Ascending aorta (tissue), 2 donors: ENCODE measurements at regions of chr17 and their contacts with region 1.

Region 1: GRCh38 chr17:60102632-60103096 is 23.9 kb upstream of the HEATR6 start:
- DNase-seq: no peak
- H3K4me3 ChIP-seq: peak overlapping the region; percentile 30 to 40
- H3K27ac ChIP-seq: no peak overlapping the region
- H3K4me1 ChIP-seq: no peaks in the 10 kb centered on the region
- H3K27me3 ChIP-seq: no peaks in the 10 kb centered on the region
- CTCF ChIP-seq: no peak

Region 2: GRCh38 chr17:59753522-59754467 is 348.9 kb before region 1 on chr17:
- intact Hi-C with region 1: no loop called
- DNase-seq: no peak
- H3K4me3 ChIP-seq: peak overlapping the region in 1 of 2 donors; percentile 30
- H3K27ac ChIP-seq: peak overlapping the region; percentile 56 to 65
- H3K4me1 ChIP-seq: peaks cover 0 to 17% of the 10 kb centered on the region in 2 donors
- H3K27me3 ChIP-seq: no peaks in the 10 kb centered on the region
- CTCF ChIP-seq: peak; percentile 60 to 69 (median 66)

Region 3: GRCh38 chr17:60563746-60564145 is 461.1 kb after region 1 on chr17:
- intact Hi-C with region 1: loop called (anchors 10 kb)
- DNase-seq: no peak
- H3K4me3 ChIP-seq: no peak overlapping the region
- H3K27ac ChIP-seq: no peak overlapping the region
- H3K4me1 ChIP-seq: no peaks in the 10 kb centered on the region
- H3K27me3 ChIP-seq: no peaks in the 10 kb centered on the region
- CTCF ChIP-seq: no peak